ENCODE measurements at regions of chr2 and their contacts with region 1.

Region 1: DNA sequence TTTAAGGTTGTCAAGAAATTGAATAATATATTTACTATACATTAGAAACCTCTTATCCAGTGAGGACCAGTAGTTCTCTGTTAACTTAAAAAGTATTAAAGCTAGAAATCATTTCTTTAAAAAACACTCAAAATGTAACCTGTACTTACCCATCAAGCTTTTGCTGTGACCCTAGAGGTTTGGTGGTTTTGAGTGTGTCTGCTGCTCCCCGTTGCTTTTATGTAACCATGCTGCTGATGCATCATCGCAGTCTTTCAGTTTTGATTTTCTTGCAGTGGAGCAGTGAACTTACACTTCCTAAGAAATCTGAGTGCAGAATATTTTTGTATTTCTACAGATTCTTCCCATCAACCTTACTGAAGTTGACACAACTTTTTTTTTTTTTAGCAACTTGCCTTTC is 34.2 kb downstream of the MRPS9 start:
- DNase-seq: peak; percentile 21
- H3K4me3 Mint-ChIP-seq: no peak overlapping the region
- H3K27ac Mint-ChIP-seq: no peak overlapping the region
- H3K4me1 Mint-ChIP-seq: peaks cover 34% of the 10 kb centered on the region
- H3K27me3 Mint-ChIP-seq: no peaks in the 10 kb centered on the region

Region 2: GRCh38 chr2:105037572-105038382 is 34.3 kb before region 1 on chr2 and contains the start of gene MRPS9:
- intact Hi-C with region 1: loop called (anchors 1 kb)
- DNase-seq: peak; percentile 96
- H3K4me3 Mint-ChIP-seq: peak within 1 kb of the TSS; percentile 95
- H3K27ac Mint-ChIP-seq: peak within 1 kb of the TSS; percentile 84
- H3K4me1 Mint-ChIP-seq: peaks cover 39% of the 10 kb centered on the region
- H3K27me3 Mint-ChIP-seq: no peaks in the 10 kb centered on the region
- total RNA-seq, gene MRPS9: 32.5 and 33.0 TPM in 2 replicates

Measured in activated T-helper 1 cell treated with anti-CD3 and anti-CD28 coated beads, Interleukin-12 subunit alpha, Interleukin-12 subunit beta, Interleukin-2, Interleukin-4 antibody, amounts not matched to agents 30 ng/mL and 10 ng/mL and 1 ng/mL, durations not matched to agents 14 hours and 24 hours and 36 hours (primary cell).